Transverse colon (tissue), 4 donors: ENCODE measurements at regions of chr16 and their contacts with region 1.

Region 1: GRCh38 chr16:2340564-2341455 is at the start of gene ABCA3:
- DNase-seq: peak; percentile 95
- H3K4me3 ChIP-seq: peak within 1 kb of the TSS; percentile 47 to 67 (median 62)
- H3K27ac ChIP-seq: peak within 1 kb of the TSS; percentile 8 to 78 (median 64)
- H3K4me1 ChIP-seq: peaks cover 0 to 23% (median 14%) of the 10 kb centered on the region in 4 donors
- H3K27me3 ChIP-seq: peaks cover 47% of the 10 kb centered on the region
- CTCF ChIP-seq: peak; percentile 98 to 100 (median 99)
- EP300 ChIP-seq: no peak
- POLR2A ChIP-seq: no peak
- total RNA-seq, gene ABCA3: 3.4 to 8.6 (median 3.7) TPM

Region 2: DNA sequence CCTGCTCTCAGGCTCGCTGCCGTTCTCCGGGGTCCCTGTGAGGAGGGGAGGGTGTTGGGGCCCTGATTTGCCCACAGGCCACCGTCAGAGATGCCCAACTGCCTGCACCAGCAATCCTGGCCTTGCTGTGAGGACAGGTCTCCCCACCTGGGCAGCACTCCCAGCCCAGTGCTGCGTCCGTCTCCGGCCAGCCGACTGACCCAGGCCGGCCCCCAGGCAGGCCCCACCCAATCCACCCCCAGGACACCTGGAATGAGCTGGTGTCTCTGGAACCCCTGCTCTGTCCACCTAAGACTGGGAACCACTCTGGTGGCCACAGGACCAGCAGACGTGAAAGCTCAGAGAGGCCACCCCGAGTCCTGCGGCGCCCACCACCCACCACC is 225.2 kb before region 1 on chr16:
- in situ Hi-C with region 1: no loop called
- intact Hi-C with region 1: no loop called
- DNase-seq: no peak
- H3K4me3 ChIP-seq: no peak overlapping the region
- H3K27ac ChIP-seq: no peak overlapping the region
- H3K4me1 ChIP-seq: peaks cover 4 to 19% (median 14%) of the 10 kb centered on the region in 4 donors
- H3K27me3 ChIP-seq: no peaks in the 10 kb centered on the region
- CTCF ChIP-seq: no peak
- EP300 ChIP-seq: no peak
- POLR2A ChIP-seq: no peak

Region 3: GRCh38 chr16:2155091-2156021 is 185.5 kb before region 1 on chr16 and contains the start of gene TRAF7:
- in situ Hi-C with region 1: no loop called
- intact Hi-C with region 1: no loop called
- DNase-seq: peak; percentile 98
- H3K4me3 ChIP-seq: peak within 1 kb of the TSS; percentile 70 to 89 (median 78)
- H3K27ac ChIP-seq: peak within 1 kb of the TSS; percentile 87 to 94 (median 92)
- H3K4me1 ChIP-seq: peaks cover 67 to 86% (median 82%) of the 10 kb centered on the region in 4 donors
- H3K27me3 ChIP-seq: no peaks in the 10 kb centered on the region
- CTCF ChIP-seq: no peak
- EP300 ChIP-seq: no peak
- POLR2A ChIP-seq: peak; percentile 100
- total RNA-seq, gene TRAF7: 43.4 to 80.4 (median 63.0) TPM

Region 4: DNA sequence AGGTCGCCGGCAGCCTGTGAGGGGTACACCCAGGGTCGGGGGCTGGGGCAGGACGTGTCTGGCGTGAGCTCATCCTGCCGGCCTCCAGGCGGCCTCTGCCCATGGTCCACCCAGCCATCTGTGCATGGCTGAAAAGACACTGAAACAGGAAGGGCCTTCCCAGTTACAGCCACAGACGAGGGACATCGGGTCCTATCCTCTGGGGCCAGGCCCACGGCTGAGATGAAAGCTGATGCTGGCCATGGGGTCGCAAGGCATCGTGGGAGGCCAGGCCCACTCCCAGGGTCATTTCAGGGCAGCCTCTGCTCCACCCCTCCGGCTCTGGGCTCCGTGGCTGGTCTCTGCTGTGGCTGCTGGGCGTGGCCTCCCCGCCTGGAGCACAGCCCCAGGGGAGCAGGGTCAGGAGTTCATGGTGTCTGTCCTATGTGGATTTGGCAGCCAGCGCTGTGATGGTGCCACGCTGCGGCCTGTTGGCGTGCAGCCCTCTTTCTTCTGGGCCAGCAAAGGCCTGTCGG is 156.4 kb after region 1 on chr16:
- in situ Hi-C with region 1: loop called in 2 of 4 experiments (anchors 25 kb)
- intact Hi-C with region 1: loop called (anchors 5 kb)
- DNase-seq: no peak
- H3K4me3 ChIP-seq: no peak overlapping the region
- H3K27ac ChIP-seq: no peak overlapping the region
- H3K4me1 ChIP-seq: peaks cover 6 to 29% (median 11%) of the 10 kb centered on the region in 4 donors
- H3K27me3 ChIP-seq: no peaks in the 10 kb centered on the region
- CTCF ChIP-seq: no peak
- EP300 ChIP-seq: no peak
- POLR2A ChIP-seq: no peak